ENCODE measurements at regions of chr9 and their contacts with region 1.

Region 1: DNA sequence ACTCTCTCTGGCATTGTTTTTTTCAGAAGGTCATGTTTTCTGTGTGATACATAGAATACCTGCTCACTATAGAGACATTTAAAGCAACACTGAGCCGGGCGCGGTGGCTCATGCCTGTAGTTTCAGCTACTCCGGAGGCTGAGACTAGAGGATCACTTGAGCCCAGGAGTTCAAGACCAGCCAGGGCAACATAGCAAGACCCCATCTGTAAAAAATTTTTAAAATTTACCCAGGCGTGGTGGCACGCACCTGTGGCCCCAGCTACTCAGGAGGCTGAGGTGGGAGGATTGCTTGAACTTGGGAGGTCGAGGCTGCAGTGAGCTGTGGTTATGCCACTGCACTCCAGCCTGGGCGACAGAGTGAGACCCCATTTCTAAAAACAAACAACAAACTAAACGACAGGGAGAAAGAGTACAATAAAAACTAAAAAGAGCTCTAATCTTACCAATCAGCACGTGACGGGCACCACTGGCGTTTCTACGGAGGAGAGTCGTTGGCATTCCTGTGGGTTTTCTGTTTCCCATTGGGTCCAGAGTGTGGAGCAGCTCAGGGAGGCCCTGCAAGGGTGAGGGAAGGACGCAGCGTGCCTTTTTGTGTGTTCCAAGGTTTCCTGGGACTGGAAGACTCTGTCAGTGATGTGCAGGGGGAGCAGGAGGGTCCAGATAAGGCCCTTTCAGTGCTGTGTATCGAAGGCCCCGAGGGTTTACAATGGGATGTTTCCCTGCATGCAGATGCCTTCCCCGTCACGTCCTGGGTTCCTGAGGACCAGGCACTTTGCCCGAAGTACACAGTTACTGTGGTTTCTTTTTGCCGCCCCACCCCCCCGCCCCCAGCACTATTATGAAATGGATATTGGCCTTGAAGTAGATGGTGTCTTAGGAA is 7.2 kb upstream of the RNU6ATAC start:
- DNase-seq: no peak
- H3K4me3 ChIP-seq: no peak overlapping the region
- H3K27ac ChIP-seq: no peak overlapping the region
- H3K4me1 ChIP-seq: peaks cover 0 to 6% of the 10 kb centered on the region in 2 donors
- H3K27me3 ChIP-seq: peaks cover 7% of the 10 kb centered on the region
- CTCF ChIP-seq: no peak

Region 2: DNA sequence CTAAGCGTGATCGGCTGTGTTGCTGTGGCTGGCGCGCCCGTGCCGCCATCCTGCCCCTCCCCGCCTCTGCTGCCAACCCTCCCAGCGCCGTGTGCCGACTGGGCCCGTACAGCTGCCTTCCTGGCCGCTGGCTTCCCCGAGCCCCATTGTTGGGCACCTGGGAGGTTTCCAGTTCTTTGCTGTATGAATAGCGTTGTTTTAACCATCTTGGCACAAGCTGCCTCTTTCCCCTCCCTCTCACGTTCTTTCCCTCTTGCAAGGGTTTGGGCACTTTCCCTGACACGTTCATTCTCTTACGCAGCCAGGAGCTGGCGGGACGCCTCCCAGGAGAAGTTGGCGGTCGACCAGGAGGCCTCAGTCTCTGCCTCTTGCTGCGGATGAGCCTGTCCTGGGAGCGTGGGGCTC is 111.6 kb after region 1 on chr9:
- intact Hi-C with region 1: loop called (anchors 5 kb)
- DNase-seq: peak; percentile 57 to 90
- H3K4me3 ChIP-seq: peak overlapping the region in 1 of 2 donors; percentile 28
- H3K27ac ChIP-seq: peak overlapping the region in 1 of 2 donors; percentile 52
- H3K4me1 ChIP-seq: peaks cover 12 to 18% of the 10 kb centered on the region in 2 donors
- H3K27me3 ChIP-seq: no peaks in the 10 kb centered on the region
- CTCF ChIP-seq: no peak